ENCODE measurements at regions of chr5 and their contacts with region 1.

Region 1: GRCh38 chr5:179166886-179167841 is 107.0 kb downstream of the ZNF354C start:
- DNase-seq: peak; percentile 29
- H3K4me3 ChIP-seq: peak overlapping the region; percentile 16
- H3K27ac ChIP-seq: no peak overlapping the region
- H3K4me1 ChIP-seq: no peaks in the 10 kb centered on the region
- H3K27me3 ChIP-seq: no peaks in the 10 kb centered on the region
- CTCF ChIP-seq: peak; percentile 87

Region 2: DNA sequence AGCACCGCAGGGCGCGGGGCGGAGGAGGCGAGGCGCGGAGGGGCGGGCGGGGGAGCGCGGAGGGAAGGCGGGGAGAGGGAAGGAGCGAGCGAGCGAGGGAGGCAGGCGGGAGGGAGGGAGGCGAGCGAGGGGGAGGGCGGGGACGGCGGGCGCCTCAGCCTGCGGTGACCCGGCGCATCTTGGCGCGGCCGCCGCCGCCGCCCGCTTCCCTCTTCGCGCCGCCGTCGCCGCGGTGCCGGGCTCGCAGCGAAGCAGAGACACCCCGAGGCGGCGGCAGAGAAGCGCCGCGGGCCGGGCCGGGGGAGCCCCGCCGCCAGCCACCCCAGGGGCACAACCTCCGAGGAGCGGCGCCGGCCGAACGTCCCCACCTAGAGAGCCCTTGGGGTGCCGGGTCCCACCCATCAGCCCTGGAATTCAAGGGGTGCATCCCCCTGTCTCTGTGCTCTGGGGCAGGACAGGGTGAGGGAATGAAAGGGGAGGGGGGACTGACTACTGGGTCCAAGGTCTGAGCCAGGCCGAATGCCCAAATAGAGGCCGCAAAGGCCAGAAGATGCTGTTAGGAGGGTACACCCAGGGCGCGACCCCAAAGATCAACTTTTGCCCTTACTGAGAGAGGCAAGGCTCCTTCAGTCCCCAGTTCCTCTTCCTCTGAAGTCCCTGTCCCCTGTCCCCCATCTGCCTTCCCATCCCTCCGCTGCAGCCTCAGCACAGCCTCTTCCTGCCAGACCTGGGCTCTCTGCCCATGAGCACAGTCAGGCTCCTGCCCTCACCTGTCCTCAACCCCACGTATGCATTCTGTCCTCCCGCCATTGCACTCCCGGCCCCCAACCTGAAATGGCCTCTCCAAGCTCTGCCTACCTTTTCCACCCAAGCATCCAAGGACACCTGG is 178.5 kb after region 1 on chr5 and contains the start of gene ADAMTS2:
- intact Hi-C with region 1: loop called (anchors 10 kb)
- DNase-seq: peak; percentile 46
- H3K4me3 ChIP-seq: peak within 1 kb of the TSS; percentile 32
- H3K27ac ChIP-seq: peak within 1 kb of the TSS; percentile 17
- H3K4me1 ChIP-seq: no peaks in the 10 kb centered on the region
- H3K27me3 ChIP-seq: peaks cover 14% of the 10 kb centered on the region
- CTCF ChIP-seq: no peak
- total RNA-seq, gene ADAMTS2: 2.9 to 4.0 TPM

Region 3: GRCh38 chr5:179495906-179496455 is 328.8 kb after region 1 on chr5:
- intact Hi-C with region 1: loop called (anchors 2 kb)
- DNase-seq: no peak
- H3K4me3 ChIP-seq: no peak overlapping the region
- H3K27ac ChIP-seq: no peak overlapping the region
- H3K4me1 ChIP-seq: no peaks in the 10 kb centered on the region
- H3K27me3 ChIP-seq: no peaks in the 10 kb centered on the region
- CTCF ChIP-seq: no peak